ENCODE measurements at regions of chr10 and their contacts with region 1.

Region 1: DNA sequence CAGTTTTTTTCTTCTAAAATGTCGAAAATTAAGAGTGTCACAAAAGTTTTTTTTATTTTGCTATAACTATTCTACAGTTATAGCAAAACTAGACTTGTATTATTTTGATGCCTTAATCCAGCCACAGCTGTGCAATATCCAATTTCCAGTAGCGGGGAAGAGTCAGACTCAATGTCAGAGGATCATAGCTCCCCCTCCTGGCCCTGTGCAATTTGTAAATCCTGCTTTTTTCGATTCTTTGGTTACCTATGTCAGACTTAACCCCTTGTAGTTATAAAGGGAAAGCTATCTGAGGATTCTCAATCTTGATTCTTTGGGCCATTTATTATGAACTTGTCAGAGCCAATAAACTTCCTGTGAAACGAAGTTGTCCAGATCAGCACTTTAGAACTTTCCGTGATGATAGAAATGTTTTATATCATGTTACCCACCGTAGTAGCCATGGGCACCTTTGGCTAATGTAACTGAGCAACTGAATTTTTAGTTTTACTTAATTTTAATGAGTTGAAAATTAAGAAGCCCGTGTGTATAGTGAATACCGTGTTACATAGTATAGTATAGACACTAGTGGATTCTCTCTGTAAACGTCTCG is 87.7 kb upstream of the PRKCQ start:
- DNase-seq: peak; percentile 74
- ATAC-seq: peak; percentile 38
- H3K4me3 Mint-ChIP-seq: no peak overlapping the region
- H3K27ac Mint-ChIP-seq: no peak overlapping the region
- H3K4me1 Mint-ChIP-seq: peaks cover 24% of the 10 kb centered on the region
- H3K27me3 Mint-ChIP-seq: no peaks in the 10 kb centered on the region
- CTCF ChIP-seq: peak; percentile 88

Region 2: GRCh38 chr10:6416892-6417512 is 250.8 kb before region 1 on chr10:
- CTCF ChIA-PET with region 1: interaction called, 66 read pairs
- POLR2A ChIA-PET with region 1: no interaction called
- intact Hi-C with region 1: loop called (anchors 5 kb)
- DNase-seq: no peak
- ATAC-seq: peak; percentile 82
- H3K4me3 Mint-ChIP-seq: no peak overlapping the region
- H3K27ac Mint-ChIP-seq: no peak overlapping the region
- H3K4me1 Mint-ChIP-seq: peaks cover 1% of the 10 kb centered on the region
- H3K27me3 Mint-ChIP-seq: no peaks in the 10 kb centered on the region
- CTCF ChIP-seq: peak; percentile 83

Region 3: DNA sequence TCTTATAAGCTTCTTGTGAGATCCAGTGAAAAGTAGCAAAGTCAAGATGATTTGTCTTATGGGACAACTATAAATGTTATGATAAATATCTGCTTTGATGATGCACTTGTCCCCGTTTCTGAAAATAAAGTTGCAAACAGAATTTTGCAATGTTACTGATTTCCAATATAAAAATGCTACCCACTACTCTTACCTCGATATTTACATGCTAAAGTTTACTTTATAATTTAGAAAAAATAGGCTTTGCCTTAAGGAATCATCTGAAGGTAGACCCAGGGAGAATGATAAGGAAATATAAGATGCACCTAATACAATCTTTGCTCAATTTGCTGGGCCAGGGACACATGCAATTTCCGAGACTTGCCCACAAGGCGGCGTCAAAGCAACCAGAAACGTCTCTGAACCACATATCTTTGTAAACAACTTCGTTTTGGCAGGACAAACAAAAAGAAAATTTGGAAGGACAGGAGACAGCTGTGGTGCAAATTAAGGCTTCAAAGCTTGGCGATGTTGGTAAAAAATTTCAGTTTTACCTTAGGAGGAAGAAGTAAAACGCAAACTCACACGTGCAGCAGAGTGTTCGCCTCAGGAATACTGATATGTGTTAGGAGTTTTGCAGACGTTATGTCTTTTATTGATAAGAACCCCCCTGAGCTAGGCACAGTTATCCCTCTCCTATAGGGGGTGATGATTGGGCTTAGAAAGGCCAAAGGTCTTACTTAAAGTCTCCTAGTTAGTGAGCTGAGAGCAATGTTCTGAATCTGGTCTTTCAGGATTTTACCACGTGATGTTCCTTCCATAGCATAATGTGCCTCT is 222.1 kb before region 1 on chr10:
- CTCF ChIA-PET with region 1: interaction called, 13 read pairs
- POLR2A ChIA-PET with region 1: no interaction called
- intact Hi-C with region 1: no loop called
- DNase-seq: peak; percentile 80
- ATAC-seq: peak; percentile 68
- H3K4me3 Mint-ChIP-seq: no peak overlapping the region
- H3K27ac Mint-ChIP-seq: peak overlapping the region; percentile 16
- H3K4me1 Mint-ChIP-seq: peaks cover 37% of the 10 kb centered on the region
- H3K27me3 Mint-ChIP-seq: no peaks in the 10 kb centered on the region
- CTCF ChIP-seq: peak; percentile 81

Region 4: DNA sequence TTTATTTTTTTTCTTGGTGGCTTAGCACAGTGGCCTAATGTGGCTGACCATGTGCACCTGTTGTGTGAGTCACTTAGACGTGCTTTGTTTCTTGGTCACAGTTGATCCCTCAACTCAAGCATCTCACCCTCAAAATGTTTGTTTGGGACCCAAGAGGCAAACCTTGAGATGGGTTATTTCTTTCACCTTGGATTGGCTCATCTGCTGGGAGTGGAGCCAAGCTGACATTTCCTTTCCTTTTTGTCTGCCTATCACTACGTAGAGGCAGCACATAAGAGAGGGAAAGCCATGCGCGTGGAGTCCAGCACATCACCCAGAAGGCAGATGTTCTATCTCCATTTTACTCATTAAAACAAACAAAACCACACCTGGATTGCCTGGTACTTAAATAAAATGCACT is 81.3 kb before region 1 on chr10:
- CTCF ChIA-PET with region 1: interaction called, 45 read pairs
- POLR2A ChIA-PET with region 1: interaction called, 6 read pairs
- intact Hi-C with region 1: no loop called
- DNase-seq: peak; percentile 72
- ATAC-seq: peak; percentile 48
- H3K4me3 Mint-ChIP-seq: peak overlapping the region; percentile 98
- H3K27ac Mint-ChIP-seq: peak overlapping the region; percentile 98
- H3K4me1 Mint-ChIP-seq: peaks cover 74% of the 10 kb centered on the region
- H3K27me3 Mint-ChIP-seq: no peaks in the 10 kb centered on the region
- CTCF ChIP-seq: no peak

Region 5: DNA sequence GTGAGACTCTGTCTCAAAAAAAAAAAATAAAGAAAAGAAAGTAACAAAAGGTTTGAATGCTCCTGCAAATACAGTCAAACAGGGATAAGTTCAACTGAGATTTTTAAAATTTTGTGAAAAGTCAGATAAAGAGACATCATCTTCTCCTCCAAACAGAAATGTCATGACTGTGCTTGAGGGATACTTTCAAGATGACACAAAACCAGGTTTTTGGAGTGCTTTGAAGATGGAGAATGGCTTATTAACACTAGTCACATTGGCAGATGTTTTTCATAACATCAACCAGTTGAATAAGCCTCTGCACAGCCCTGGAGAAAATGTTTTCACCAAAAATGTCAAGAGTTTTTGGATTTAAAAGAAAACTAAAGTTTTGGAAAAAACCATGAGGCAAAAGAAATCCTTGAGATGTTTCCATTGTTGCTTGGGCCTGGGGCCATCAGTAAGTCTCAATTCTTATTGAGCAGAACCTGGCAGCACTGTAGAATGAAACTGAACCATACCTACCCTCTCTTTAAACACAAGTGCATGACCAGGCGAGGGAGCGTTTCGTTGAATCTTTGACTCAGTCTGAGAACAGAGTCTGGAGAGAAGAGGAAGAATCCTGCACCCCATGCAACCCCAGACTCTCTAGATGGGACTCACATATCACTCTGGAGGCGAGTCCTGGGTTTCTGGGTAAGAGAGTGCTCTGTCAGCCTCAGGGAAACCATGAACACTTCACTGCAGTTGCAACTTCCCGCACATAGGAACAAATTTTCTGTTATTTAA is 50.3 kb before region 1 on chr10:
- CTCF ChIA-PET with region 1: no interaction called
- POLR2A ChIA-PET with region 1: no interaction called
- intact Hi-C with region 1: no loop called
- DNase-seq: no peak
- ATAC-seq: peak; percentile 42
- H3K4me3 Mint-ChIP-seq: no peak overlapping the region
- H3K27ac Mint-ChIP-seq: peak overlapping the region; percentile 71
- H3K4me1 Mint-ChIP-seq: peaks cover 52% of the 10 kb centered on the region
- H3K27me3 Mint-ChIP-seq: no peaks in the 10 kb centered on the region
- CTCF ChIP-seq: no peak

Region 6: DNA sequence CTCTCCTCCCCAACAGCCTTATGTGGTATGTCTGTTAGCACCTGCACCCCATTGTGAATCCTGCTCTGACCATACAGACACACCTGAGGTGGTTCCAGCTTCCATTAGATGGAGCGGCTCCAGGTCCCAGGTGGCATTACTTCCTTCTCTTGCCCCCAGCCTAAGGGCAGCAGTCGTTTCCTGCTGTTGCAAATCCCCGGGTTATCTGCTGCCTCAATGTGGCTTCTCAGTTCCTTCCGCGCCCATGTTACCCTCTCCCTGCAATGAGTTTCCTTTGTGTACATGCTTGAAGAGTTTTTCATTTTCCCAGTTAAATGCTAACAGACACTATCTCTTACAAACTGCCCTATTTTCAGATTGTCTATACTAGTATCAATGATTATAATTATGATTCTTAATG is 24.9 kb before region 1 on chr10:
- CTCF ChIA-PET with region 1: interaction called, 19 read pairs
- POLR2A ChIA-PET with region 1: no interaction called
- intact Hi-C with region 1: no loop called
- DNase-seq: no peak
- ATAC-seq: no peak
- H3K4me3 Mint-ChIP-seq: no peak overlapping the region
- H3K27ac Mint-ChIP-seq: peak overlapping the region; percentile 67
- H3K4me1 Mint-ChIP-seq: peaks cover 44% of the 10 kb centered on the region
- H3K27me3 Mint-ChIP-seq: no peaks in the 10 kb centered on the region
- CTCF ChIP-seq: no peak

Region 7: DNA sequence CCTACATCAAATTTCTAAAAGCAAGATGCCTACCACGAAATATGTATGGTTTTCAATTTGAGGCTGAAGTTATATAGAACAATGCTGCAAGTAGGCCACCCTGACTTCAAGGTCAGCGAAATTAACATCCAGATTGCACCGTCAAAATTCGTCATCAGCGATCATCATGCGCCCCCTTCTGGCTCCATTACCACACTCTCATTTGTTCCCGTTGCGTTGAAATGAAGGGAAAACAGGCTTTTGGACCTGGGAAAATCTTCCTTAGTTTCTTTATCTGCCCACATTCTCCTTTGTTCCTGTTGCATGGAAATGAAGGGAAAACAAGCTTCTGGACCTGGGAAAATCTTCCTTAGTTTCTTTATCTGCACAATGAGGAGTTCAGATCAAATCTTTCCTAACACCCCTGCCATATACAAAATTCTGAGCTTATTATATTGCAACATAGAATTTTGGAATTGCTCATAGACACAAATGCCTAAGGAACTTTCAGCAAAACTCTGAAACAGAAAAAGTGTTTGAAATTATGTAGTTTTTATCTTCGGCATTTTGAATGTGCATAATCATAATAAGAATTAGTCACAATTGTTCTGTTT is 10.5 kb after region 1 on chr10:
- CTCF ChIA-PET with region 1: interaction called, 40 read pairs
- POLR2A ChIA-PET with region 1: no interaction called
- intact Hi-C with region 1: no loop called
- DNase-seq: peak; percentile 80
- ATAC-seq: peak; percentile 47
- H3K4me3 Mint-ChIP-seq: no peak overlapping the region
- H3K27ac Mint-ChIP-seq: no peak overlapping the region
- H3K4me1 Mint-ChIP-seq: peaks cover 4% of the 10 kb centered on the region
- H3K27me3 Mint-ChIP-seq: peaks cover 17% of the 10 kb centered on the region
- CTCF ChIP-seq: peak; percentile 80

Region 8: DNA sequence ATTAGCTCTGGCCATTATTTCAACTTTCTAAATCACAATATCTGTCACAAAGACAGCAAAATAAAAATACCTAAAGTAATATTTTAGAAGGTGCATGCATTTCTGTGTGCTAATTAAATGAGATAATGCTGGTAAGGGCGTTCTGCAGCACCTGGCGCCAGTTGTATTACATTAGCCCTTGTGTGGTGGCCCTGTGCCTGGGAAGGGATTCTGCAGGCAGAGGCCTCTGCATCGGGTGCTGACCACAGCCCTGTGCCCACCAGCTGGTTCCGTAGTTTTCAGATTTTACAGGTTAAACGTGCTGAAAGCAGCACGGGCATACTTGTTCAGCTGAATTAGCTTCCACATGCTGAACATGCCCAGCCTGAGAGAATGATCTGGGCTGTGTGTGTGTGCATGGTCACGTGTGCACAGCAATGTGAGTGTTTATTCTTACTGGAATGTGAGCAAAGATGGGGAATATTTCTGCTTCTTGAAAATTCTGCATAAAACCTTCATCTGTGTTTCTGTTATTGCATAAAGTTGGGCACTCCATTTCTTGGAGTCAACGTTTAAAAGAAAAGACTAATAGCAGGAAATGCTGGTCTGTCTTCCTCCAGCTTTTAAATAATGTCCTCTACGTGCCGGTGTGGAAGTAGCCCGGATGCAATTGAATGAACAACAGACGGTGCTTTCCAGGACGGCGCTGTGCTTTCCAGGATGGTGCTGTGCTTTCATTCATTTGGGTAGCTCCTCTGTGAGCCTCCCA is 70.2 kb after region 1 on chr10:
- CTCF ChIA-PET with region 1: no interaction called
- POLR2A ChIA-PET with region 1: no interaction called
- intact Hi-C with region 1: no loop called
- DNase-seq: peak; percentile 24
- ATAC-seq: peak; percentile 37
- H3K4me3 Mint-ChIP-seq: no peak overlapping the region
- H3K27ac Mint-ChIP-seq: no peak overlapping the region
- H3K4me1 Mint-ChIP-seq: peaks cover 8% of the 10 kb centered on the region
- H3K27me3 Mint-ChIP-seq: peaks cover 22% of the 10 kb centered on the region
- CTCF ChIP-seq: no peak